ENCODE measurements at regions of chr5 and their contacts with region 1.

Region 1: DNA sequence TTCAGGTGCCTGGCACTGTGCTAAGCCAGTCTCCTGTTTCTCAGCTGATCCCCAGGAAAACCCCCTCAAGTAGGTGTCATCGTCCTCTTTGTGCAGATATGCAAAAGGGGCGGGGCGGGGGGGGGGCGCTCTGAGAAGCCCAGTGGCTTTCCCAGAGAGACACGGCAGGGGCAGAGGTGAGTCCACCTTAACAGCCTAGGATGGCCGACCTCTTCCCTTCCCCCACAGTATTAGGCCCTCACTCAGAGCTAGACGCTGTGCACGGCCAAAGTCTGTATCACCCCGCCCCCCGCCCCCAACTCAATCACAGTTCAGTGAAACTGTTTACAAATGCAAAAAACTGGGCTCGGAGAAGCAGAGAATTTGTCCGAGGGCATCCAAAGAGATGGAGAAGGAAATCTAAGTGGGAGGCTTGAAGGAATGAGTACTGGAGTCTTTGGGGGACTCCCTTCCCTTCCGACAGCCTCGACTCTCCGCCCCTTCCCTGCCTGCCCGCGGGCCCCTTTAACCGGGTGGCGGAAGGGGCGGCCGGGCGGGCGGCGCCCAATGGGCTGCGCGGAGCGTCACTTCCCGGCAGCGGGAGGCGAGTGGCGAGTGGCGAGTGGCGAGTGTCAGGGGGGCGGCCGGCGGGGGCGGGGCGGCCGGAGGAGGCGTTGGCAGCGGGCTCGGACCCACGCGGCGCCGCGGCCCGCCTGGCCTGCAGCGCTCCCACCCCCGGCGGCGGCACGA is at the start of gene ERGIC1:
- DNase-seq: peak in 8 of 9 experiments; percentile 58 to 84 (median 72)
- ATAC-seq: peak; percentile 74
- H3K4me3 ChIP-seq: peak within 1 kb of the TSS; percentile 67 to 81
- H3K4me3 Mint-ChIP-seq: peak within 1 kb of the TSS; percentile 86
- H3K27ac ChIP-seq: peak within 1 kb of the TSS; percentile 67 to 88
- H3K27ac Mint-ChIP-seq: peak within 1 kb of the TSS; percentile 92
- H3K4me1 ChIP-seq: peaks cover 44% of the 10 kb centered on the region
- H3K4me1 Mint-ChIP-seq: peaks cover 44% of the 10 kb centered on the region
- H3K27me3 ChIP-seq: no peaks in the 10 kb centered on the region
- H3K27me3 Mint-ChIP-seq: no peaks in the 10 kb centered on the region
- CTCF ChIP-seq: no peak
- total RNA-seq, gene ERGIC1: 61.0 to 61.2 TPM

Region 2: DNA sequence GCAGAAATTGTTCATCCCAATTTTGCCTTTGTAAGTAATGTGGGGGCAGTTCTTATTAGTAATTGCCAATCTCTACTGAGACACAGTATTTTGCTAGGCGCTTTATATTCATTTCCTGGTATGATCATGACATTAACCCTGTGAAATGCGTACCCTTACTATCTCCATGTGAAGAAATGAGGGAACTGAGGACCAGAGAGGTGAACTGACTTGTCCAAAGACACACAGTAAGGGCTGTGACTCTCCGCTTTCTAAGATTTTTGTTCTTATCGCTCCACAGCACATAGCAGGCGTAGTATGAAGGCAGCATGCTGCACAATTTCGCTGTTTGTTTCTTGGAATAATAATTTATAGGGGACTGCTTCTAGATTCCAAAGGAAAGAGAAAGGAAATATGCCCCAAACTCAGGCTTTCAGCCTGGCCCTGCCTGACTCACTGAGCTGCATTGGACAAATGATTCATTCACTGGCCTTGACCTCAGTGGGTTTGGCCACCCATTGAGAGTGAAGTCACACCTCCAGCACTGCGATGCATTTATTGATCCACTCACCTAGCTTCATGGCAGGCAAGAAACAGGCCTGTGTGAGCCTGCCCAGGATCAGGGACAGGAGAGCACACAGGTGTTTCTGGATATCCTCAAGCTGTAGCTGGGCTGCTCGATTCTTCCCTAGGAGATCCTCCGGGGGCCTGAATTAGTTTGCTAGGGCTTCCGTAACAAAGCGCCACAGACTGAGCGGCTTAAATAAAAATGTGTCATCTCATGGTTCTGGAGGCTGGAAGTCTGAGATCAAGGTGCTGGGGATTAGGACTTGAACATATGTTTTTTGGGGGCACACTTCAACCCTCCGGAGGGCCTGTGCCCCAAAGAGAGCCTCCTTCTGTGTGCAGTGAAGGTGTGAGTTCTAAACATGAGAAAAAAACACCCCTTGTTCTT is 55.7 kb before region 1 on chr5:
- CTCF ChIA-PET with region 1: interaction called, 16 read pairs
- POLR2A ChIA-PET with region 1: interaction called, 39 read pairs
- intact Hi-C with region 1: loop called (anchors 1 to 2 kb)
- DNase-seq: peak in 1 of 9 experiments; percentile 47
- ATAC-seq: peak; percentile 52
- H3K4me3 ChIP-seq: peak overlapping the region; percentile 18 to 22
- H3K4me3 Mint-ChIP-seq: peak overlapping the region; percentile 59
- H3K27ac ChIP-seq: peak overlapping the region; percentile 82 to 95
- H3K27ac Mint-ChIP-seq: peak overlapping the region; percentile 94
- H3K4me1 ChIP-seq: peaks cover 23% of the 10 kb centered on the region
- H3K4me1 Mint-ChIP-seq: peaks cover 38% of the 10 kb centered on the region
- H3K27me3 ChIP-seq: no peaks in the 10 kb centered on the region
- H3K27me3 Mint-ChIP-seq: no peaks in the 10 kb centered on the region
- CTCF ChIP-seq: no peak

Region 3: DNA sequence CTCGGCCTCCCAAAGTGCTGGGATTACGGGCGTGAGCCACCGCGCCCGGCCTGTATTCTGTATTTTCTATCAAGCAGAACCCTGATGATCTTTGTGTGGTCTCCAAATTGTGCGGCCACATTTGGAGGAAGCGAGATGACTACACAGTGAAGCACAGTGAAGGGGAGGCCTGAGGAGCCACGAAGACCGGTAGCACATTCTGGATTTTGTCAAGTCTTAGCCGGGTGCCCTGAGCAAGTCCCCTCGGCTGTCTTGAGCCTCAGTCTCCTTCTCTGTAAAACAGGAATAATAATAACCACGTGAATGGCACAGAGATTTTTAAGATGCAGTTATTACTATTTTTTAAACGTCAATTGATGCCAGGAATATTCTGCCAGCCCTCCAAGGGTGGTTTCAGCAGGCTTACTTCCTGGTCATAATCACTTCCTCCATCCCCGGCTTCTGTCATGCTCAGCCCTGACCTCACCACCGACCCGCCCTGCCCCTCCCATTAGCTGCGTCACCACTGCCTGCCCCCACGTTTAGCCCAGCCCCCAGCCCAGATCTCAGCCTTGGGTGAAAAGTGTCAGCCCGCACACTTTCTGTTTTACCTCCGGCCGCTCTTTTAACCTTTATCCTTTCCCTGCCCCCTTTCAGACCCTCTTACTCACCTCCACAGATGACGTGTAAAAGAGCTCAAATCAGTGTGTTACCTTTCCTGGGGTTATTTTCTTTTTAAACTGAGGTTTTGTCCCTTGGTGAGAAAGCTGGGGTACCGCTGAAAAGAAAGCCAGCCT is 26.8 kb before region 1 on chr5:
- CTCF ChIA-PET with region 1: no interaction called
- POLR2A ChIA-PET with region 1: no interaction called
- intact Hi-C with region 1: loop called (anchors 1 to 2 kb)
- DNase-seq: peak; percentile 69 to 95 (median 83)
- ATAC-seq: peak; percentile 96
- H3K4me3 ChIP-seq: peak overlapping the region; percentile 39 to 47
- H3K4me3 Mint-ChIP-seq: peak overlapping the region; percentile 77
- H3K27ac ChIP-seq: peak overlapping the region; percentile 61 to 79
- H3K27ac Mint-ChIP-seq: peak overlapping the region; percentile 90
- H3K4me1 ChIP-seq: peaks cover 10% of the 10 kb centered on the region
- H3K4me1 Mint-ChIP-seq: peaks cover 12% of the 10 kb centered on the region
- H3K27me3 ChIP-seq: no peaks in the 10 kb centered on the region
- H3K27me3 Mint-ChIP-seq: no peaks in the 10 kb centered on the region
- CTCF ChIP-seq: no peak

Measured in CD8-positive, alpha-beta T cell (primary cell).